ENCODE measurements at regions of chr13 and their contacts with region 1.

Region 1: GRCh38 chr13:93614776-93615175 is 388.2 kb downstream of the GPC6 start:
- DNase-seq: no peak
- H3K4me3 ChIP-seq: no peak overlapping the region
- H3K27ac ChIP-seq: no peak overlapping the region
- H3K4me1 ChIP-seq: no peaks in the 10 kb centered on the region
- H3K27me3 ChIP-seq: no peaks in the 10 kb centered on the region
- CTCF ChIP-seq: no peak

Region 2: GRCh38 chr13:93674337-93674755 is 59.6 kb after region 1 on chr13:
- CTCF ChIA-PET with region 1: no interaction called
- dilution Hi-C with region 1: no loop called
- in situ Hi-C with region 1: no loop called
- intact Hi-C with region 1: loop called (anchors 10 kb)
- DNase-seq: no peak
- H3K4me3 ChIP-seq: no peak overlapping the region
- H3K27ac ChIP-seq: no peak overlapping the region
- H3K4me1 ChIP-seq: no peaks in the 10 kb centered on the region
- H3K27me3 ChIP-seq: no peaks in the 10 kb centered on the region
- CTCF ChIP-seq: no peak

Measured in mammary epithelial cell (primary cell).